Right ventricle myocardium superior (tissue), 1 donor: ENCODE measurements at regions of chr7 and their contacts with region 1.

Region 1: GRCh38 chr7:141522657-141523342 is 28.4 kb upstream of the AGK start:
- DNase-seq: no peak
- ATAC-seq: no peak

Region 2: GRCh38 chr7:141045126-141045841 is 477.5 kb before region 1 on chr7:
- intact Hi-C with region 1: no loop called
- DNase-seq: no peak
- ATAC-seq: no peak

Region 3: DNA sequence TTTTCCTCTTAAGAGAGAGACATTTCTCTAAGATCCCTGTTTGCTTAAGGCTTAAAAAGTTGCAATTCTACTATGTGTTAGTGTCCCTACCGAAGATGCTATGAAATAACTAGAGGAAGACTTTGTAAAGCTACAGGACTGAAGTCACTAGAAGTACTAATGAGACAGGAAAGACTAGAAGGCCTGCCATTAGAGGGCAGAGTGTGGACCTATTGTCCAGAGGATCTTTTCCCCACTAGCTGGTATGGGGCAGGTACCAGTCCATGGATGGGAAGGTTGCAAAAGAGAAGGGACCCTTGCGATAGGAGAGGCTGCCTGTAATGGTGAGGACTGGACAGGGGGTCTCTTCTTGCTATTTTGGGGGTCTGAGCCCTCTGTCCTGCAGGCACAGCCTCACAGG is 270.8 kb before region 1 on chr7:
- intact Hi-C with region 1: loop called (anchors 10 kb)
- DNase-seq: no peak
- ATAC-seq: peak; percentile 66

Region 4: DNA sequence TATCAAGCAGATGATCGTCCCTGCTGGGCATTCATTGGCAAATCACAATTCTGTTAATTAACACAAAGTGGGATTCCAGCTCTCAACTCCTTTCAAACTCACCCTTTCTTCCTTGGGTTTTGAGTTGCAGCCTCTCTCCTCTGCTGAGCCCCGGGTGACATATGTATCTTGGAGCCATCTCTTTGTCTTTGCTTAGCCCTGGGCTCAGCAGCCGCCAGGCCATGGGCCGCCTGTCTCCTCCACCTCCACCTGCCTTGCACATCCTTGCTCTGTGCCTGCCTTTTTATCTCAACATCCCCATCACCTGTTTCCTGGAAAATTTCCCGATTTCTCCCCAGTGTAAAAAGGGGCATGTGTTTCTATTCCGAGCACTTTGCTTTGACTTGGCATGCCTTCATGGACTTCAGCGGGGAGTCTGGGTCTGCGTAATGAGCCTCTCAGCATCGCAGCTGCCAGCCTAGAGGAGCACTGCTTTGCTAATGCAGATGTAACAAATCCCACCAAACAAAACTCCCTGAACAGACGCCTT is 112.9 kb before region 1 on chr7:
- intact Hi-C with region 1: no loop called
- DNase-seq: no peak
- ATAC-seq: peak; percentile 34